ENCODE measurements at regions of chr16 and their contacts with region 1.

Region 1: GRCh38 chr16:46801428-46802049 is 29.4 kb downstream of the C16orf87 start:
- DNase-seq: no peak
- H3K4me3 Mint-ChIP-seq: no peak overlapping the region
- H3K27ac Mint-ChIP-seq: peak overlapping the region; percentile 1
- H3K4me1 Mint-ChIP-seq: peaks cover 8% of the 10 kb centered on the region
- H3K27me3 Mint-ChIP-seq: no peaks in the 10 kb centered on the region
- CTCF ChIP-seq: peak; percentile 38

Region 2: GRCh38 chr16:46568472-46569230 is 232.9 kb before region 1 on chr16:
- CTCF ChIA-PET with region 1: no interaction called
- intact Hi-C with region 1: no loop called
- DNase-seq: no peak
- H3K4me3 Mint-ChIP-seq: no peak overlapping the region
- H3K27ac Mint-ChIP-seq: no peak overlapping the region
- H3K4me1 Mint-ChIP-seq: no peaks in the 10 kb centered on the region
- H3K27me3 Mint-ChIP-seq: no peaks in the 10 kb centered on the region
- CTCF ChIP-seq: no peak

Region 3: DNA sequence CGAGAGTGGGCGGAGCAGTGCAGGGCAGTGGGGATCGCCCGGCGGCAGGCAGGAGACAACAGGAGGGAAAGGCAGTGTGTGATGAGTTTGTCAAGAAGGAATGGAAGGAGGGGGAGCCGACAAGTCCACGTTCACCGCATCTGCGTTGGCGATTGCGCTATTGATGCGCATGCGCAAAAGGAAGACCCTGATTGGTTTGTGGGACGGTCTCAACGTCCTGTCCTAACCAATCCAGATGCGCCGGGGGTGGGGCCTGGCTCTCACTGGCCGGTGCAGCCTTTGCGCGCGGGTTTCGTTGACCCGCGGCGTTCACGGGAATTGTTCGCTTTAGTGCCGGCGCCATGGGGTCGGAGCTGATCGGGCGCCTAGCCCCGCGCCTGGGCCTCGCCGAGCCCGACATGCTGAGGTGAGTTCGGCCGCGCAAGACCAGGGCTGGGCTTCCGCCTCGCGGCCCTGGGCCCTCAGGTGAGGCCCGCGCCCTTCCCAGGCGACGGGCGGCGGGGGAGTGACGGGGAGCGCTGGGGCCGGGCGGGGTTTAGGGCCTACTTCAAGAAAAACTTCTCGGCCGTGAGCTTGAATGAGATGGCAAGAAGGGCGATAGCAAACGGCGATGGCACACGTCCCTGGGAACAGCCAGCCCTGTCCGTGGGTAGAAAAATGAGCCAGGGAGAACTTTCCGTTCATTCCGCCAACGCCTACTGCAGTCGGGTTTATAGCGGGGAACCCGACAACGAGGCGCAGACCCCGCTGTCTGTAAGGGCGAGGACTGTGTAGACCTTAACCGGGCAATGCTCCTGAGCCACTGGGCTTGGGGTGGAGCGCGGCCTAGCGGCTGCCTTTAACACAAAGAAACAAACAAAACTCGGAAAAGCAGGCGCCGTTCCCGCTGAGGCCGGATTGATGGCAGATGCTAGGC is 111.9 kb before region 1 on chr16 and contains the start of gene ORC6:
- CTCF ChIA-PET with region 1: no interaction called
- intact Hi-C with region 1: loop called (anchors 5 kb)
- DNase-seq: peak; percentile 99
- H3K4me3 Mint-ChIP-seq: no peak within 1 kb of the TSS
- H3K27ac Mint-ChIP-seq: no peak within 1 kb of the TSS
- H3K4me1 Mint-ChIP-seq: peaks cover 40% of the 10 kb centered on the region
- H3K27me3 Mint-ChIP-seq: no peaks in the 10 kb centered on the region
- CTCF ChIP-seq: peak; percentile 12
- total RNA-seq, gene ORC6: 64.9 and 68.3 TPM in 2 replicates